PC-3 (cell line): ENCODE measurements at regions of chr2 and their contacts with region 1.

Region 1: DNA sequence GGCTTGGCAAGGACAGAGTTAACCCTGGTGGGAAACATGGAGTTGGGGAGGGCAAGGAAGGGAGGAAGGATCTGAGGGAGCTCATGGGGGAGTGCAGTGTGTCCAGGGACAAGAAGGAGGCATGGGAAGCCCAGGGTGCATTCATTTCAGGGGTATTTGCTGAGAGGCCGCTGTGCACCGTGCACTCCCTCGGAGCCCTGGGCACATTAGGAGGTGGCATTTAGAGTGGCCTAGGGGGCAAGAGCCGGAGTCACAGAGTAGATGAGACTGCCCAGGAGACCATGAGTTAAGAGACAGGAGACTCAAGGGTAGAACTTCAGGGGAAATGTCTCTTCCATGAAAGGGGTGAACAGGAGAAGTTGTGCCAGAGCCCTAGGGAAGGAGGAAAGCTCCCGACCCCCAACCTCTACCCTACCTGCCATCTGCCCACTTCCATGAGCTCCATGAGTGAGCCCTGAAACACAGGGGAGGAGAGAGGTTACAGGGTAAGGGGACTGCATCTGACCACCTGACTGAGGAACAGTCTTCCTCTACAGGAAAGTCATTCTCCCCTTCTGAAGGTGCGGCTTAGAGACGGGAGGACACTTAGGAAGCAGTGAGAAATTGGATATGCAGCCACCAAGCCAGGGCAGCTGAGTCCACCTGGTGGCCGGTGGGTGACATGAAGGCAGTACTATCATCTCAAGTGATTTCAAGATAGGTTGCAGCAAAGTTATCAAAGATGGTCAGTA is 58.5 kb upstream of the COPS8 start:
- DNase-seq: peak; percentile 78
- ATAC-seq: peak; percentile 74
- H3K4me3 ChIP-seq: no peak overlapping the region
- H3K27ac ChIP-seq: no peak overlapping the region
- H3K4me1 ChIP-seq: peaks cover 30% of the 10 kb centered on the region
- H3K27me3 ChIP-seq: no peaks in the 10 kb centered on the region
- CTCF ChIP-seq: peak; percentile 96

Region 2: GRCh38 chr2:236569573-236569973 is 457.6 kb before region 1 on chr2 and contains the start of gene ACKR3:
- CTCF ChIA-PET with region 1: no interaction called
- POLR2A ChIA-PET with region 1: no interaction called
- intact Hi-C with region 1: loop called (anchors 2 kb)
- DNase-seq: peak; percentile 82
- ATAC-seq: peak; percentile 99
- H3K4me3 ChIP-seq: peak within 1 kb of the TSS; percentile 70
- H3K27ac ChIP-seq: no peak within 1 kb of the TSS
- H3K4me1 ChIP-seq: peaks cover 21% of the 10 kb centered on the region; the same call in 1 of the 2 replicates
- H3K27me3 ChIP-seq: no peaks in the 10 kb centered on the region
- CTCF ChIP-seq: peak; percentile 66
- total RNA-seq, gene ACKR3: 0.86 and 3.1 TPM in 2 replicates

Region 3: DNA sequence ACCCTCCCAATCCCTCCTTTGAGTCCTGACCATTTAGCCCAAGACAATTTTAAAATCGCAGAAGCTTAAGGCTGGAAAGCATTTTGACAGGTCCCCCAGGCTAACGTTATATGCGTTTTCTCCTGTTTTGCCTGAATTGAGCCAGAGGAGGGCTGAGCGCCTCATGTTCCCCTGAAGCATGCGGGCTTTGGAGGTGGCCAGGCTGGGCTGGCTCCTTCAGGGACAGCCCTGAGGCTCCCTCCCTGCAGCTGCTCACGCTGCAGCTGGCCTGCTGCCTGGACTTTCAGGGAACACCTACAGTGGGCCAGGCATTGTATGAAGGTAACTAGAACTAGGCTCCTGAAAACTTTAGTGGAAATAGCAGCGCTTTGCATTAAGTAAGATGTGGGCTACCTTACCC is 278.3 kb before region 1 on chr2:
- CTCF ChIA-PET with region 1: no interaction called
- POLR2A ChIA-PET with region 1: no interaction called
- intact Hi-C with region 1: loop called (anchors 2 kb)
- DNase-seq: no peak
- ATAC-seq: peak; percentile 9
- H3K4me3 ChIP-seq: no peak overlapping the region
- H3K27ac ChIP-seq: peak overlapping the region; percentile 66
- H3K4me1 ChIP-seq: peaks cover 67% of the 10 kb centered on the region
- H3K27me3 ChIP-seq: no peaks in the 10 kb centered on the region
- CTCF ChIP-seq: no peak

Region 4: GRCh38 chr2:236824877-236825692 is 202.1 kb before region 1 on chr2:
- CTCF ChIA-PET with region 1: no interaction called
- POLR2A ChIA-PET with region 1: no interaction called
- intact Hi-C with region 1: loop called (anchors 5 kb)
- DNase-seq: peak; percentile 73
- ATAC-seq: peak; percentile 91
- H3K4me3 ChIP-seq: no peak overlapping the region
- H3K27ac ChIP-seq: peak overlapping the region; percentile 52
- H3K4me1 ChIP-seq: peaks cover 26% of the 10 kb centered on the region
- H3K27me3 ChIP-seq: no peaks in the 10 kb centered on the region
- CTCF ChIP-seq: no peak

Region 5: GRCh38 chr2:236904389-236905280 is 122.5 kb before region 1 on chr2:
- CTCF ChIA-PET with region 1: no interaction called
- POLR2A ChIA-PET with region 1: no interaction called
- intact Hi-C with region 1: loop called (anchors 5 kb)
- DNase-seq: peak; percentile 61
- ATAC-seq: peak; percentile 73
- H3K4me3 ChIP-seq: no peak overlapping the region
- H3K27ac ChIP-seq: no peak overlapping the region
- H3K4me1 ChIP-seq: peaks cover 11% of the 10 kb centered on the region
- H3K27me3 ChIP-seq: no peaks in the 10 kb centered on the region
- CTCF ChIP-seq: no peak

Region 6: GRCh38 chr2:236965021-236965693 is 62.0 kb before region 1 on chr2:
- CTCF ChIA-PET with region 1: no interaction called
- POLR2A ChIA-PET with region 1: no interaction called
- intact Hi-C with region 1: no loop called
- DNase-seq: no peak
- ATAC-seq: no peak
- H3K4me3 ChIP-seq: no peak overlapping the region
- H3K27ac ChIP-seq: no peak overlapping the region
- H3K4me1 ChIP-seq: peaks cover 4% of the 10 kb centered on the region; the same call in 1 of the 2 replicates
- H3K27me3 ChIP-seq: no peaks in the 10 kb centered on the region
- CTCF ChIP-seq: no peak